Mammary epithelial cell (primary cell): ENCODE measurements at regions of chr10 and their contacts with region 1.

Region 1: DNA sequence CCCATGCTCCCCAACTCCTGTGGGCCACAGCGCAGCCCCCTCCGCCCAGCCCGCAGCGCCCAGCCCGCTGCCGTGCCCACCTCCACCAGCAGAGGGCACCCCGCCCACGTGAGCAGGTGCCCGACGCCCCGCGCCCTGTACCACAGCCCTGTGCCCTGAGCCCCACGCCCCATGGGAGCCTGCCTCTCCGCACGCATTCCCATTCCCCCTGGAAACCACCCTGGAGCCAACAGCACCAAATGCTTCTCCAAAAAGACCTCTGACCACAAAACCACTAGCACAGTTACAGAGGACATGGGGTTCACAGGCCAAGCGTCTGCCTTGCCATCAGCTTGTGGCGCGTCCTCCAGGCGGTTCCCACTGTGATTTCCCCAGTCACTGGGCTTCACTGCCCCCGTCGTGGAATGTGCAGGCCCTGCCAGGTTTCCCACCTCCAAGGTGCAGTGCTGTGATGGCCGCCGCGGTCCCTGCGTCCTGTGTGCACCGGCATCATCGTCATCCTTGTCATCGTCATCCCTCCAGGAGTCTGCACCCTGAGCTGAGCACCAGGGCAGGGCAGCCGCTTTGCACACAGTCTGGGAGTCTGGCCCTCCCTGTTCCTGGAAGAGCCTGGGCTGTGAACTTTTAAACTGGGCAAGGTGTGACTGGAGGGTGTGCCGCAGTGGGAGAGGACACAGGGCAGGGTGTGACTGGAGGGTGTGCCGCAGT is 61.7 kb downstream of the PWWP2B start:
- DNase-seq: no peak
- H3K4me3 ChIP-seq: no peak overlapping the region
- H3K27ac ChIP-seq: no peak overlapping the region
- H3K4me1 ChIP-seq: peaks cover 4% of the 10 kb centered on the region
- H3K27me3 ChIP-seq: no peaks in the 10 kb centered on the region
- CTCF ChIP-seq: peak; percentile 73 to 86

Region 2: GRCh38 chr10:132520177-132520811 is 61.5 kb after region 1 on chr10:
- CTCF ChIA-PET with region 1: no interaction called
- dilution Hi-C with region 1: loop called (anchors 5 kb)
- in situ Hi-C with region 1: no loop called
- intact Hi-C with region 1: no loop called
- DNase-seq: no peak
- H3K4me3 ChIP-seq: no peak overlapping the region
- H3K27ac ChIP-seq: no peak overlapping the region
- H3K4me1 ChIP-seq: peaks cover 17% of the 10 kb centered on the region
- H3K27me3 ChIP-seq: no peaks in the 10 kb centered on the region
- CTCF ChIP-seq: no peak

Region 3: DNA sequence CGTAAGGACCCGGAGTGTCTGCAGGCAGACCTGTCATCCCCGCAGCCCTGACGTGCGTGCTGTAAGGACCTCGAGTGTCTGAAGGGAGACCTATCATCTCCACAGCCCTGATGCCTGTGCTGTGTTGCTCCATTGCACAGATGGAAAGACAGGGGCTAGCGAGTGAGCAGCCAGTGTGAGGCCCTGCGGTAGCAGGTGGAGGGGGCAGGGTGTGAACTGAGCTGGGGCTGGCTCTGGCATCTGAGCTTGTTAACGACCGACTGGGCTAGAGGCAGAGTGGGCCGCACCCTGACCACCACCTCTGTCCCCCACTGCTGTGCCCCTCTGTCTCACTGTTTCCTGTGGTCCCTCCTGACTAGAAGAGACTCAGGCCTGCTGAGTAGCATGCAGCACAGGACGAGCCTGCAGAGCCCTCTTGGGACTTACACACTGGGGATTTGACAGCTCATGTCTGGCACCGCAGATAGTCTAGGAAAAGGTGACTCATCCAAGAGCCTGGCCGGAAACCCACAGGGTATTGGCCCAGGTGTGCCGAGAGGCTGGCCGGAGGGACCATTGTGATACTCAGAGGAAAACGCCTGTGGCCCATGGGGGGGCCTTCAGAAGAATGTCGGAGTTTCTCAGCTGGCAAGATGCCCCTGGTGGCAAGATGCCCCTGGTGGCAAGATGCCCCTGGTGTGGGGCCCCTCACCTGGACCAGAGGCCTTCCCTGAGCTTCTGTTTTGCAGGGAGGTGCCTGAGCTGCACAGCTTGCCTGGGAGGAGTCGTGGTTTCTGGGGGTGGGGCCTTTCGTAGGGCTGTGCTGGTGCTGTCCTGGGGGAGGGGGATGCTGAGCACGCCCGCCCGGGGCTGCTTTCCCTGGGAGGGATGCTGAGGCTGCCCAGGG is 113.1 kb after region 1 on chr10:
- CTCF ChIA-PET with region 1: no interaction called
- dilution Hi-C with region 1: no loop called
- in situ Hi-C with region 1: no loop called
- intact Hi-C with region 1: loop called (anchors 5 kb)
- DNase-seq: peak; percentile 94
- H3K4me3 ChIP-seq: peak overlapping the region in 1 of 3 experiments; percentile 49
- H3K27ac ChIP-seq: no peak overlapping the region
- H3K4me1 ChIP-seq: peaks cover 28% of the 10 kb centered on the region
- H3K27me3 ChIP-seq: no peaks in the 10 kb centered on the region
- CTCF ChIP-seq: no peak

Region 4: DNA sequence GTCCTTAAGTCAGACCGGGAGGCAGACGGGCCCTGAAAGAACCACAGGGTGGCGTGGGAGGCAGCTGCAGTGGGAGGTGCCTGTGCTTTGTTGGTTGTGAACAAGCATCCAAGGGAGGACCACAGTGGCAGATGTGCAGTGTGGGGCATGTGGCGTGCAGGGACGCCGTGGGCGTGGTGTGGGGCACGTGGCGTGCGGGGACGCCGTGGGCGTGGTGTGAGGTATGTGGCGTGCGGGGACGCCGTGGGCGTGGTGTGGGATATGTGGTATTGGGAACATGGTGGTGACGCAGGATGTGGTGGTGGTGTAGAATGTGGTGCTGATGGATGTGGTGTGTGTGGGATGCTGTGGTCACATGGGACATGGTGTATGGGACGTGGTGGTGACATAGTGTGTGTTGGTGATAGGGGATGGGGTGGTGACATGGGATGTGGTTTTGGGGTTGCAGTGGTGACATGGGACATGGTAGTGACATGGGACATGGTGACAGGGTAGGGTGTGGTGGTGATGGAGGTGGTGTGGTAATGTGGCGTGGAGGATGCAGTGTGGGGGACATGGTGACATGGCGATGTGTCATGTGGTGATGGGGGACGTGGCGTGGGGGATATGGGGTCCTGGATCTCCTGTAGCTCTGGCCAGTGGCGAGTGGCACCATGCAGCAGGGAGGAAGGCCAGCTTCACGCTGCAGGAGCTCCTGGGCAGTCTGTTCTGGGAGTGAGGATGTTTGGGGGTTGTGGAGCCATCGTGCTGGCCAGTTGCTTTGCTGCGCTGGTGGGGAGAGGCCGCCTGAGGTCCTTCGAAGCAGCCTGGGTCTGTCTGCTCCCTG is 157.6 kb after region 1 on chr10:
- CTCF ChIA-PET with region 1: no interaction called
- dilution Hi-C with region 1: loop called (anchors 5 kb)
- in situ Hi-C with region 1: no loop called
- intact Hi-C with region 1: no loop called
- DNase-seq: no peak
- H3K4me3 ChIP-seq: no peak overlapping the region
- H3K27ac ChIP-seq: no peak overlapping the region
- H3K4me1 ChIP-seq: no peaks in the 10 kb centered on the region
- H3K27me3 ChIP-seq: no peaks in the 10 kb centered on the region
- CTCF ChIP-seq: no peak